ENCODE measurements at regions of chr9 and their contacts with region 1.

Region 1: DNA sequence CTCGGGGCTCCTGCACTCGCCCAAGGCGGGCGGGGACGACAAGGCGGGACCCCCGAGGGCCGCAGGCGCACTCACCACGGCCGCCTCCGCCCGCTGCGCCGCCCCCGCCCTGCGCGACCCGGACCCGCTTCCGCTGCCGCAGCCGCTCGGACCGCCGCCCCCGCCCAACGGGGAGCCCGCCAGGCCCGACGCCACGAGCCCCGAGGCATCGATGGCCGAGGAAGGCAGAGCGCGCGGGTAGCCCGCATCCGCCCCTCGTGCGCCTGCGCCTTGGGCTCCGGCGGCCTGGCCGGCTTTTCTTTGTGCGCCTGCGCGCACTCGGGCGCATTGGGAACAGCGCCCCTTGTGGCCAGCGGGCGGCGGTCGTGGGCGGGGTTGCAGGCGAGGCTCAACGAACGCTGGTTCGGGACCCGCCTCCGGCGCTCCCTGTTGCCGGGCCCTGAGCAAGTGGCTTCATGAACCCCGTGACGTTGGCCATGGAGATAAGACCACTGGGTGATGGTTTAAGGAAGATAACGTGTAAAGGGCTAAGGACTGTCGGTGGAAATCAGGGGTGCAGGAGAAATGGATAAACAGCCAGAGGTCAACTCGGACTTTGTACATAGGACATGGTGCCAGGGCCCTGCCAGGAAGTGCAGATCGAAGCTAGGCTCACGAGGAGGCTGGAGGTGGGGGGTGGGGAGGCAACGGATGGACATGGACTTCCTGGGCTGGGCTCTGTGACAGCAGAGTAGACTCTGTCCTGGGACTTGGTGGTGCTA is at the starts of genes C8G and FBXW5:
- DNase-seq: peak; percentile 94
- H3K4me3 ChIP-seq: peak within 1 kb of the TSS; percentile 99
- H3K27ac ChIP-seq: peak within 1 kb of the TSS; percentile 87
- H3K4me1 ChIP-seq: peaks cover 10% of the 10 kb centered on the region
- H3K27me3 ChIP-seq: no peaks in the 10 kb centered on the region
- CTCF ChIP-seq: peak; percentile 97
- total RNA-seq, gene C8G: 5.3 to 11.9 TPM
- total RNA-seq, gene FBXW5: 162 to 174 TPM

Region 2: GRCh38 chr9:136885950-136886578 is 58.6 kb before region 1 on chr9 and contains the start of gene TRAF2:
- intact Hi-C with region 1: loop called (anchors 10 kb)
- DNase-seq: peak; percentile 98
- H3K4me3 ChIP-seq: peak within 1 kb of the TSS; percentile 99
- H3K27ac ChIP-seq: peak within 1 kb of the TSS; percentile 96
- H3K4me1 ChIP-seq: peaks cover 9% of the 10 kb centered on the region
- H3K27me3 ChIP-seq: no peaks in the 10 kb centered on the region
- CTCF ChIP-seq: no peak
- total RNA-seq, gene TRAF2: 22.4 to 50.6 TPM

Region 3: GRCh38 chr9:137029058-137029936 is 84.6 kb after region 1 on chr9:
- intact Hi-C with region 1: loop called (anchors 2 kb)
- DNase-seq: peak; percentile 87
- H3K4me3 ChIP-seq: peak overlapping the region; percentile 52
- H3K27ac ChIP-seq: peak overlapping the region; percentile 46
- H3K4me1 ChIP-seq: peaks cover 25% of the 10 kb centered on the region
- H3K27me3 ChIP-seq: no peaks in the 10 kb centered on the region
- CTCF ChIP-seq: peak; percentile 91